ENCODE measurements at regions of chr15 and their contacts with region 1.

Region 1: DNA sequence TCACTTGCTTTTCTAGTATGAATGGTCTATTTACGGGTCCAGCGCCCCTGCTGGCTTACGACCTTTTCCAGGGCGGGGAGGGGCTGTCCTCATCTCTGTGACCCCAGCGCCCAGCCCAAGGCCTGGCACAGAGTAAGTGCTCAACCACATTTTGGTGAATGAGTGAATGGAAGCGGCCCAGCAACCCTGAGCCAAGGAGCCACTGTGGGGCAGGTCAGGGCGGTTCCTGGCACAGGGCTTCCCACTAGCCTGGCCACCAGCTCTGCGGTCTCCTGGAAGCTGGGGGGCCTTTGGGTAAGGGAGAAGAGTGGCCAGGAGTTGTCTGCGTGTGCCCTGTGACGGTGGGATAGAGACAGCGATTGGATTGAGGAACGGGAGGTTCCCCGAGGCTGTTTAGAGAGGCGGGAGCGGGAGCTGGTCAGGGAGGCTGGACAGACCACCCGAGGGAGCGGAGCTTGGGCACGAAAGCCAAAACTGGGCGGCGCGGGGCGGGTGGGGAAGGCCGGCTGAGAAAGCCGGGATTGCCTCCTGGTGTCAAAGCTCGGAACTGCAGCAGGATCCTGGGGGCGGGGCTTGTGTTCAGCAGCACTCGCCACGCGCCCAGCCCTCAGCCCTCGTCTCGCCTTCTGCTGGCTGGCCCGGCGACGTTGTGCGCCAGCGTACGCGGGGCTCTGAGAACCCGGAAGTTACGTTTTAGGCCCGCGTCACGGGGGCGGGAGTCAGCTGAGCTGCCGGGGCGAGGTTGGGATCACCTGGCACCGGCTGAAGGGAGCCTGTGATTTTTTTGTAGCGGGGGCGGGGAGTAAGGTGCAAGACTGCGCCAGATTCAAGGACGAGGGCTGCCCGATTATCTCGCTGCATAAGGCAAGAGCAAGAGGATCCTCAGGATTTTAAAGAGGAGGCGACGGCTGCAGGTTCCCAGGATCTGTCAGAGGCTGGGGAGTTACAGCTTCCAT is at the start of gene VPS18:
- DNase-seq: peak; percentile 96
- H3K4me3 Mint-ChIP-seq: peak within 1 kb of the TSS; percentile 95
- H3K27ac Mint-ChIP-seq: peak within 1 kb of the TSS; percentile 98
- H3K4me1 Mint-ChIP-seq: peaks cover 31% of the 10 kb centered on the region
- H3K27me3 Mint-ChIP-seq: no peaks in the 10 kb centered on the region
- CTCF ChIP-seq: peak; percentile 92
- total RNA-seq, gene VPS18: 13.2 and 18.5 TPM in 2 replicates

Region 2: DNA sequence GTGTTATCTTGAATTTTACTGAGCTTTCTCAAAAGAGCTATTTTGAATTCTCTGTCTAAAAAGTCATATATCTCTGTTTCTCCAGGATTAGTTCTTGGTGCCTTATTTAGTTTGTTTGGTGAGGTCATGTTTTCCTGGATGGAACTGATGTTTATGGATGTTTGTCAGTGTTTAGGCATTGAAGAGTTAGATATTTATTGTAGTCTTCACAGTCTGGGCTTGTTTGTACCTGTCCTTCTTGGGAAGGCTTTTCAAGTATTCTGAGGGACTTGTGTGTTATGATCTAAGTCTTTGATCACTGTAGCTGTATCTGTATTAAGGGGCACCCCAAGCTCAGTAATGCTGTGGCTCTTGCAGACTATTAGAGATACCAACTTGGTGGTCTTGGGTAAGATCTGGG is 209.6 kb before region 1 on chr15:
- CTCF ChIA-PET with region 1: interaction called, 7 read pairs
- POLR2A ChIA-PET with region 1: no interaction called
- intact Hi-C with region 1: loop called (anchors 5 kb)
- DNase-seq: no peak
- H3K4me3 Mint-ChIP-seq: no peak overlapping the region
- H3K27ac Mint-ChIP-seq: no peak overlapping the region
- H3K4me1 Mint-ChIP-seq: peaks cover under 1% of the 10 kb centered on the region
- H3K27me3 Mint-ChIP-seq: no peaks in the 10 kb centered on the region
- CTCF ChIP-seq: no peak

Region 3: GRCh38 chr15:40743921-40744814 is 149.8 kb before region 1 on chr15:
- CTCF ChIA-PET with region 1: interaction called, 8 read pairs
- POLR2A ChIA-PET with region 1: interaction called, 3 read pairs
- intact Hi-C with region 1: loop called (anchors 1 kb)
- DNase-seq: peak; percentile 88
- H3K4me3 Mint-ChIP-seq: no peak overlapping the region
- H3K27ac Mint-ChIP-seq: peak overlapping the region; percentile 33
- H3K4me1 Mint-ChIP-seq: peaks cover 7% of the 10 kb centered on the region
- H3K27me3 Mint-ChIP-seq: no peaks in the 10 kb centered on the region
- CTCF ChIP-seq: no peak

Region 4: DNA sequence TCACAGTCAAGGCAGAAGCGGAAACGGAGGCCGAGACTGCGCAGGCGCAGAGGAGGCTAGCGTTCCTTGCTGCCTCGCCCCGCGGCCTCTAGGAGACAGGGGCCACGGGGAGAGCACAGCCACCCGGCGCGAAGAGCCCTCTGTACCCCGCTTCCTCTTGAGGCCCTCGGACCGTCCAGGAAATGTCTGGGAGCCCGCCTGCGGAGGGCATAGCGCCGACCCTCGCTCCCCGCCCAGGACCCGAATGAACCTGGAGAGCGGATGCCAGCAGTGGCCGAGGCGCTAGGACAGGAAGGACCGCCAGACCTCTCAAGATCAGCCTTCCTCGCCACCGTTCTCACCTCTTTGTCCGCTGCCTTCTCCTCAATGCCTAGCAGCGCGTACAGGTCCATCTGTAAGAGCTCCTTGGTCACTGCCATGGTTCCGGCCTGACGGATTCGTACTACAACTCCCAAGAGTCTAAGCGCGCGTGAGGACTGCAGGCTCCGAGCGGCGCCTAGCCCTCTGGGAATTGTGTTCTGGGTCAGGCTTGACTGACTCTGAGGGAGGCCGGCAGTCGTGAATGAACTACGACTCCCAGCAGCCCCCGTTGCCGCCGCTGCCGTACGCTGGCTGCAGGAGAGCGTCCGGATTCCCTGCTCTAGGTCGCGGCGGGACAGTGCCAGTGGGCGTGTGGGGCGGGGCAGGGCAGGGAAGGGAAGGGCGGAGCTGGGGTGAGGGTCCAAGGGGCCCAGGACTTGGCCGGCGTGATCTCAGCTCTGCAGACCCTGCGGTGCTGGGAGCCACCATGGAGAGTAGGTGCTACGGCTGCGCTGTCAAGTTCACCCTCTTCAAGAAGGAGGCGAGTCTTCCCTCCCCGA is 86.8 kb before region 1 on chr15 and contains the starts of genes DNAJC17 and ZFYVE19:
- CTCF ChIA-PET with region 1: interaction called, 4 read pairs
- POLR2A ChIA-PET with region 1: interaction called, 17 read pairs
- intact Hi-C with region 1: no loop called
- DNase-seq: peak; percentile 98
- H3K4me3 Mint-ChIP-seq: peak within 1 kb of the TSS; percentile 81
- H3K27ac Mint-ChIP-seq: peak within 1 kb of the TSS; percentile 83
- H3K4me1 Mint-ChIP-seq: peaks cover 12% of the 10 kb centered on the region
- H3K27me3 Mint-ChIP-seq: no peaks in the 10 kb centered on the region
- CTCF ChIP-seq: peak; percentile 10
- total RNA-seq, gene DNAJC17: 55.1 and 58.1 TPM in 2 replicates
- total RNA-seq, gene ZFYVE19: 19.2 and 19.9 TPM in 2 replicates

Region 5: GRCh38 chr15:40857601-40858341 is 36.2 kb before region 1 on chr15:
- CTCF ChIA-PET with region 1: interaction called, 131 read pairs
- POLR2A ChIA-PET with region 1: interaction called, 68 read pairs
- intact Hi-C with region 1: loop called (anchors 1 kb)
- DNase-seq: peak; percentile 80
- H3K4me3 Mint-ChIP-seq: no peak overlapping the region
- H3K27ac Mint-ChIP-seq: no peak overlapping the region
- H3K4me1 Mint-ChIP-seq: peaks cover 22% of the 10 kb centered on the region
- H3K27me3 Mint-ChIP-seq: no peaks in the 10 kb centered on the region
- CTCF ChIP-seq: peak; percentile 89

Region 6: GRCh38 chr15:40873625-40874561 is 20.1 kb before region 1 on chr15 and contains the start of gene RHOV:
- CTCF ChIA-PET with region 1: interaction called, 40 read pairs
- POLR2A ChIA-PET with region 1: interaction called, 25 read pairs
- intact Hi-C with region 1: no loop called
- DNase-seq: peak; percentile 91
- H3K4me3 Mint-ChIP-seq: peak within 1 kb of the TSS; percentile 77
- H3K27ac Mint-ChIP-seq: peak within 1 kb of the TSS; percentile 52
- H3K4me1 Mint-ChIP-seq: peaks cover 40% of the 10 kb centered on the region
- H3K27me3 Mint-ChIP-seq: no peaks in the 10 kb centered on the region
- CTCF ChIP-seq: peak; percentile 56
- total RNA-seq, gene RHOV: 1.2 and 1.7 TPM in 2 replicates

Region 7: GRCh38 chr15:40906091-40906990 is 12.3 kb after region 1 on chr15:
- CTCF ChIA-PET with region 1: interaction called, 41 read pairs
- POLR2A ChIA-PET with region 1: interaction called, 9 read pairs
- intact Hi-C with region 1: no loop called
- DNase-seq: peak; percentile 97
- H3K4me3 Mint-ChIP-seq: peak overlapping the region; percentile 10
- H3K27ac Mint-ChIP-seq: peak overlapping the region; percentile 51
- H3K4me1 Mint-ChIP-seq: peaks cover 35% of the 10 kb centered on the region
- H3K27me3 Mint-ChIP-seq: no peaks in the 10 kb centered on the region
- CTCF ChIP-seq: peak; percentile 71

Region 8: DNA sequence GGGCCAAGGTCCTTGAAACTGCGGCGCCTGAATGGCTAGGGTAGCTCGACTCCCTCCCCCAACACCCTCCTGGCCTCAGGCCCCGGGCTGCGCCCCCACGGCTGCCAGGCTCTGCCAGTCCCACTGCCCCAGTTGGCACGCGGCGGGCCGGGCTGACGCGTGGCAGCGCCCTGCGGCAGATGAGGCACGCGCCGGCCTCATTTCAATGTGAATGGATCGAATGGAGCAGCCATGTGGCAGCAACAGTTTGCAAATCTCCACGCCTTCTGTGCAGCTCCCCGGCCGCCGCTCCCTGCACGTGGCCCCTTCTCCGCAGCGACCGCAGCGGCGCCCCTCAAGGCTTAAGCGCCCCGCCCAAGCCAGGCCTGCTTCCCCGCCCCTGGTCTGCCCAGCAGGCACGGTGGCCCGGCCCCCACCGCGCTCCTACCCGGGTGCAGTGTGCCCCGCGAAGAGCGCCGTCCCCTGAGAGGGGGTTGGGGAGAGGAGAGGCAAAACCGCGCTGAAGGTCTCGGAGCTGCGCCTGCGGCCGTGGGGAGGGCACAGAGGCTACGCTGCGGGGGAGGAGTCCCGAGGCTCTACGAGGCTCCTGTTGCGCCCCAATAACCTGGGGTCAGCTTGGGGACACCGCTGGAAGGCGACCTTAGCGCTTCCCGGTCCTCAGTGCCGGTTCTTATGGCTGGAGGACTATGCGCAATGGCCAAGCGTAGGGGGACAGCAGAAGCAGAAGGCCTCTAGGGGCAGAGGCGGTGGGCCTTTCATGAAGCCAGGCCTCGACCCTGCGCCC is 32.1 kb after region 1 on chr15:
- CTCF ChIA-PET with region 1: no interaction called
- POLR2A ChIA-PET with region 1: no interaction called
- intact Hi-C with region 1: no loop called
- DNase-seq: no peak
- H3K4me3 Mint-ChIP-seq: no peak overlapping the region
- H3K27ac Mint-ChIP-seq: no peak overlapping the region
- H3K4me1 Mint-ChIP-seq: peaks cover 13% of the 10 kb centered on the region
- H3K27me3 Mint-ChIP-seq: peaks cover 46% of the 10 kb centered on the region
- CTCF ChIP-seq: no peak

Region 9: GRCh38 chr15:41079717-41080116 is 185.7 kb after region 1 on chr15:
- CTCF ChIA-PET with region 1: no interaction called
- POLR2A ChIA-PET with region 1: no interaction called
- intact Hi-C with region 1: no loop called
- DNase-seq: no peak
- H3K4me3 Mint-ChIP-seq: no peak overlapping the region
- H3K27ac Mint-ChIP-seq: peak overlapping the region; percentile 53
- H3K4me1 Mint-ChIP-seq: no peaks in the 10 kb centered on the region
- H3K27me3 Mint-ChIP-seq: no peaks in the 10 kb centered on the region
- CTCF ChIP-seq: no peak